IMR-90 (cell line): ENCODE measurements at regions of chr1 and their contacts with region 1.

Region 1: DNA sequence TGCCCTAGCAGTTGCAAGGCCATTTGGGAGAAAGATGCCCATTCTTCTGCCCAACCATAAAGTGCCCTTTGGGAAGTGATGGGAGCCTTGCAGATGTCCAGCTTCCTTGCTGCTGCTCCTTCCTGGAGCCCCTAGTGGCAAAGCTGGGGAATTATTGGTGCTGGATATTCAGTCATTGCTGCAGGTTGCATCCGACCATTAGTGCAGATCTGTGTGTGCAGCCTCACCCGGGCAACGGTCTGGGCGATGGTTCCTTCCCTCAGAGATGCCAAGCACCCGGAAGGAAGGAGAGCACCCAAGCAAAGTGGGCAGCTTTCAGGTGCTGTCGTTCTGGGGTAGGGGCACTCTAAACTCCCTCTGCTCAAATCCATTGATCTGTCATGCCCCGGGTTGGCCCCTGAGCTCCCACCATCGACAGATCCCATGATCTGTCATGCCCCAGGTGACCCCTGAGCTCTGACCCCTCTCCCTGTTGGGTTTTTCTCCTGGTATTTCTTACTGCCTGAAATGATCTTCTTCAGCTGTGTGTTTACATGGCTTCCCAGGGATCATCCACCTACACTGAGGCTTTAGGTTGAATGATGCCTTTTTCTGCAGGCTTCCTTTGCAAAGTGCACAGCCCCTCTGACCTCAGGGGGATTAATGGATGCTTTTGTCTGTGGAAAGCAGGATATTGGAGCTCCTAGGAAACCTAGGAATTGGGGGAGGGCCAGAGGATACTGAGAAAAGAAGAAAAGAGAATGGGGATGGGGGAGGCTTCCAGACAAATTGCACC is 467.5 kb downstream of the PTPRU start:
- DNase-seq: peak; percentile 54
- ATAC-seq: peak; percentile 76
- H3K4me3 ChIP-seq: no peak overlapping the region
- H3K27ac ChIP-seq: no peak overlapping the region
- H3K4me1 ChIP-seq: peaks cover 4% of the 10 kb centered on the region
- H3K27me3 ChIP-seq: no peaks in the 10 kb centered on the region; the same call in 1 of the 2 replicates
- CTCF ChIP-seq: peak; percentile 74
- POLR2A ChIP-seq: no peak
- RAD21 ChIP-seq: peak; percentile 69

Region 2: DNA sequence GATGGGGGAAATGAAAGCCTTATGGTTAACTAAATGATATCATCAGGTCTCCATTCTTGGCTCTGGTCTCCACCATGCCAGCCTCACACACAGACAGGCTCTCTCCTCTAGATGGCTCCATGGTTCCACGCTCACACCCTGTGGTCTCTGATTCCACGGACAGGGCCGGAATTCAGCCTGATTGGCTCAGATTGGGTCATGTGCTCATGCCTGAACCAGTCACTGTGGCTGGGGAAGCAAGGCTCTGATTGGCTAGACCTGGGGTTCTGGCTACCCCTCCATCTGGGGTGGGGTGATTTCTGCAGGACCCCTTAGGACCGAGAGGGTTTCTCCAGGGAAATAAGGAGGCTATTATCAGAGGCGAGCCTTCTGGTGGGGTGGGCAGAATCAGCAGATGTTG is 190.4 kb before region 1 on chr1:
- CTCF ChIA-PET with region 1: interaction called, 3 read pairs
- POLR2A ChIA-PET with region 1: no interaction called
- dilution Hi-C with region 1: no loop called
- in situ Hi-C with region 1: no loop called
- intact Hi-C with region 1: loop called (anchors 5 kb)
- DNase-seq: peak; percentile 70
- ATAC-seq: peak; percentile 93
- H3K4me3 ChIP-seq: no peak overlapping the region
- H3K27ac ChIP-seq: no peak overlapping the region
- H3K4me1 ChIP-seq: no peaks in the 10 kb centered on the region
- H3K27me3 ChIP-seq: peaks cover 9% of the 10 kb centered on the region
- CTCF ChIP-seq: peak; percentile 85
- POLR2A ChIP-seq: 0 out of 2 replicates have a peak, but pooled peaks have one; percentile 29
- RAD21 ChIP-seq: peak; percentile 97

Region 3: DNA sequence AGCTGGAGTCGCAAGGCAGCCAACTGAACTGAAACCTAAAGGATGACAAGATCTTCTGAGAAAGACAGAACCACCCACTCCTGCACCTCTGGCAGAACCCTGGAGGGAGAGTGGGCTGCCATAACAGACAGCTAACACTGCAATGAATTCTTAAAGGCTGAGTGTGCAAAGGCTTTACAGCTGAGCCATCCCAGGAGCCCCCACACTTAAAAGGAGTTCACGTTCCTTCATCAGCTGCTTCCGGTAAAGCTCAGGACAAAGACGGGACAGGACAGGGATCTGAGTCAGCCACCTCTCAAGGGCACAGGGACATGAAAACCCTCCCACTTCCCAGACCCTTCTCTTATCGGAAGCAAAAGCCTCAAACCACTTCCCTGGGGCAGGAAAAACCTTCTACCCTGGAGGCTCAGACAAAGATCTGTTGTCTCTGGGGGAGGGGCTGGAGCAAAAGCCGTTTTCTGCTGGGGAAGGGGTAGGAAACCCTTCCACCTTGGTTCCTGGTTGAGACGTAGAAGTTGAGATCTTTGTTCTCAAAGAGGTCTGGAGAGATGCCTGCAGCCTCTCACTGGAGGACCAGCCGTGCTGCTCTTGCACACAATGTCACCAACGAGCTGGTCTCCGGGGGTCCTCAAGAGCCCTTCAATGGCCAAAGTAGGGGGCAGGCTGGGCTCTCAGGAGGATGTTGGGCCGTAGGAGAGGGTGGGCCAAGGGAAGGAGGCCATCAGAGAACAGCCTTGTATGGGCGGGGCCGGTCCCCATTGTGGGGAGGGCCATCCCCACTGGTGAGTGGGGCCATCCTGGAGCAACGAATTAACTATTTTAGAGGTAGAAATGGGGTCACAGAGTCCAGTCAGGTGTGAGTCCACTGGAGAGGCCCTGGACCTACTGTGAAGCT is 15.1 kb before region 1 on chr1:
- CTCF ChIA-PET with region 1: interaction called, 18 read pairs
- POLR2A ChIA-PET with region 1: no interaction called
- dilution Hi-C with region 1: no loop called
- in situ Hi-C with region 1: no loop called
- intact Hi-C with region 1: no loop called
- DNase-seq: peak; percentile 88
- ATAC-seq: peak; percentile 82
- H3K4me3 ChIP-seq: no peak overlapping the region; the same call in 1 of the 2 replicates
- H3K27ac ChIP-seq: peak overlapping the region; percentile 22
- H3K4me1 ChIP-seq: peaks cover 9% of the 10 kb centered on the region
- H3K27me3 ChIP-seq: no peaks in the 10 kb centered on the region
- CTCF ChIP-seq: no peak
- POLR2A ChIP-seq: no peak
- RAD21 ChIP-seq: no peak

Region 4: DNA sequence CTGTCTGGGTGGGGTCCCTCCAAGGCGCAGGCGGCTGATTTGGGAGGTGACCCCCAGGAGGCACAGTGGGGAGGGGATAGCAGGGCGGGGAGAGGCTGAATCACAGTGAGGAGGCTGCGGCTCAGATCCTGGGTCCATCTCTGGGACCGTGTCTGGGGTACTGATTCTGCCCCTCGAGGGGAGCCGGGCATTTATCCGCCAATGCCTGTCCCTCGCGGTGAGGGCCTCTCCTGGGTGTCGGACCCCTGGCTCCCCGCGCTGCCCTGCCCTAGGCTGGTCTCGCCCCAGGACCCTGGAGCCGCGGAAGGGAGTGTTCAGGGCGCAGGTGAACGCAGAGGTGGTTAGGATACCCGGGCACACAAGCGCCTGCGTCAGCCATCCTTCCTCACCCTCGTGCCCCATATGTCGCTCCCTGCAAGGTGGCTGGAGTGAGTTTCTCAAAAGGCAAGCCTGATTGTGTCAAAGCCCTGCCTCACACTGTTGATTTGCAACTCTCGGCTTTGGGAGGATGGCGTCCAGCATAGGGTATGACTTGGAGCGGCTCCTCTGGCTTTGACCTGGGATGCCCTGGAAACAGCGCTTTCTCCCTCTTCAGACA is 63.4 kb after region 1 on chr1:
- CTCF ChIA-PET with region 1: no interaction called
- POLR2A ChIA-PET with region 1: no interaction called
- dilution Hi-C with region 1: no loop called
- in situ Hi-C with region 1: no loop called
- intact Hi-C with region 1: no loop called
- DNase-seq: no peak
- ATAC-seq: no peak
- H3K4me3 ChIP-seq: no peak overlapping the region
- H3K27ac ChIP-seq: no peak overlapping the region
- H3K4me1 ChIP-seq: no peaks in the 10 kb centered on the region
- H3K27me3 ChIP-seq: peaks cover 4% of the 10 kb centered on the region; the same call in 1 of the 2 replicates
- CTCF ChIP-seq: no peak
- POLR2A ChIP-seq: no peak
- RAD21 ChIP-seq: no peak

Region 5: DNA sequence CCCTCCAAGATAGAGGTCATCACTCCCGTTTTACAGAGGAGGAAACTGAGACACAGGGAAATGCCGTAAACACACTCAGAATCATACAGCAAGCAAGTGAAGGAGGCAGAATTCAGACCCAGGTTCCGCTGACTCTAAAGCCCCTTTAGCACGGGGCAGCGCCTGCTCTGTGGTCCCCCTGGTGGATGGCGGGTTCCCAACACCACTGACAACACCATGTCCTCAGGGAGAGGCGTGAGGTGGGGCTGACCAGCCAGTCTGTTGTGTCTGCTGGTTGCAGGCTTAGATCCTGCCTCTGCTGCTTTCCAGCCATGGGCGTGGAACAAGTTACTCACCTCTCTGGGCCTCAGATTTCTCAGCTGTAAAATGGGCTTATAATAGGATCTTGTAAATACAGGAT is 402.3 kb after region 1 on chr1:
- CTCF ChIA-PET with region 1: interaction called, 3 read pairs
- POLR2A ChIA-PET with region 1: no interaction called
- dilution Hi-C with region 1: no loop called
- in situ Hi-C with region 1: no loop called
- intact Hi-C with region 1: loop called (anchors 5 kb)
- DNase-seq: peak; percentile 18
- ATAC-seq: peak; percentile 74
- H3K4me3 ChIP-seq: no peak overlapping the region
- H3K27ac ChIP-seq: no peak overlapping the region
- H3K4me1 ChIP-seq: no peaks in the 10 kb centered on the region
- H3K27me3 ChIP-seq: peaks cover 21% of the 10 kb centered on the region
- CTCF ChIP-seq: peak; percentile 52
- POLR2A ChIP-seq: no peak
- RAD21 ChIP-seq: peak; percentile 49